A673 (cell line): ENCODE measurements at regions of chr1 and their contacts with region 1.

Region 1: DNA sequence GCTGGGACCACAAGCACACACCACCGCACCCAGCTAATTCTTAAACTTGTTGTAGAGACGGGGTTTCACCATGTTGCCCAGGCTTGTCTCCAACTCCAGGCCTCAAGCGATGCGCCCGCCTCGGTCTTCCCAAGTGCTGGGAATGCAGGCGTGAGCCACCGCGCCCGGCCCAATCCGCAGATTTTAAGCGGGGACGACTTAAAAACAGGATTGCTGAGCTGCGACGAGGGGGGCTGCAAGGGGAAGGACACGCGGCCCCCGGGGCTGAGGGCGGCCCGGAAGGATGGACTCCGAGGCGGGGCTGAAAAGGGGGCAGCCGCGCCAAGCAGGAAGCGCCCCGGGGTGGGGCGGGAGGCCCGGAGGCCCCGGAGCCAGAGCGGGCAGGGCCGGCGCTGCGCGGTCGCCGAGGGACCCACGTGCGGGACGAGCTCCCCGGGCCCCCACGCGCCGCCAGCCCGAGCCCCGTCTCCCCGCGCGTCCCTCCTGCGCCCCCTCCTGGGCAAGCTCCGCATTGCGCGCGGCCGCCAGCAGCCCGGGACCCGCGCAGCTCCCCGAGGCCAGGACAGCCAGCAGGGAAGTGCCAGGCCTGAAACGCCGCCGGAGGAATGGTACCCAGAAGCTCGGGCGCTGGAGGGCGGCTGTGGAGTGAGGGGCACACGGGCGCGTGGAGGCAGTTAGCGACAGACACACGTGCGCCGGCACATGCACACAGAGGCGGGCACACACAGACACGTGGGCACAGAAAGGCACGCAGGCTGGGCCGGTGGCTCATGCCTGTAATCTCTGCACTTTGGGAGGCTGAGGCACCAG is 5.5 kb upstream of the PRKCZ start:
- DNase-seq: peak; percentile 78
- H3K4me3 ChIP-seq: peak overlapping the region; percentile 24
- H3K27ac ChIP-seq: no peak overlapping the region
- H3K4me1 ChIP-seq: peaks cover 5% of the 10 kb centered on the region
- H3K27me3 ChIP-seq: peaks cover 12% of the 10 kb centered on the region
- CTCF ChIP-seq: peak; percentile 73

Region 2: GRCh38 chr1:1079408-1080121 is 965.1 kb before region 1 on chr1:
- CTCF ChIA-PET with region 1: no interaction called
- POLR2A ChIA-PET with region 1: no interaction called
- intact Hi-C with region 1: no loop called
- DNase-seq: peak; percentile 88
- H3K4me3 ChIP-seq: peak overlapping the region; percentile 35
- H3K27ac ChIP-seq: peak overlapping the region; percentile 50
- H3K4me1 ChIP-seq: peaks cover 15% of the 10 kb centered on the region
- H3K27me3 ChIP-seq: no peaks in the 10 kb centered on the region
- CTCF ChIP-seq: no peak

Region 3: DNA sequence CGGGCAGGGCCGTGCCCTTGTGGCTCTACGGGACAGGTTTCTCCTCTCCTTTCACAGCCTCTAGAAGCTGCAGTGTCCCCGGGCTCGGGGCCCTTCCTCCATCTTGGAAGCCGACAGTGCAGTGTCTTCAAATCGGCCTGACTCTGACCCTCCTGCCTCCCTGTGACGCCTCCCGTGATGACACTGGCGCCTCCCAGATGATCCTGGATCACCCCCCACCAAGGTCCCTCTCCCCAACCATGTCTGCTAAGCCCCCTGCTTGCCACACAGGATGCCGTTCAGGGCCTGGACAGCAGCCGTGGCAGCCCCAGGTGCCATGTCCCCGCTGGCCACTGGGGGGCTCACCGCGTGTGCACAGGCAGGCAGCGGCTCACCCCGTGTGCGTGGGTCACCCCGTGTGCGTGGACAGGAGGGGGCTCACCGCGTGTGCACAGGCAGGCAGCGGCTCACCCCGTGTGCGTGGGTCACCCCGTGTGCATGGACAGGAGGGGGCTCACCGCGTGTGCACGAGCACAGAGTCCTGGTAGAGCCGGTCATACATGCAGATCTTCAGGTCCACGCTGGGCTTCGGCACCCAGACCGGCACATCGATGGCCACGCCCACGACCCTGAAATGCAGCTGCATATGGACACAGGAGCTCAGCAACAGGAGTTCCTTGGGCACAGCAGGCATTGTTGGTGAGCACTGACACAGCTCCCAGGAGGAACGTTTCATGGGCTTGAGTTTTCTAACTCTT is 100.7 kb before region 1 on chr1:
- CTCF ChIA-PET with region 1: no interaction called
- POLR2A ChIA-PET with region 1: no interaction called
- intact Hi-C with region 1: loop called (anchors 1 kb)
- DNase-seq: peak; percentile 47
- H3K4me3 ChIP-seq: no peak overlapping the region
- H3K27ac ChIP-seq: no peak overlapping the region
- H3K4me1 ChIP-seq: no peaks in the 10 kb centered on the region
- H3K27me3 ChIP-seq: no peaks in the 10 kb centered on the region
- CTCF ChIP-seq: peak; percentile 93

Region 4: GRCh38 chr1:1959840-1960479 is 84.8 kb before region 1 on chr1:
- CTCF ChIA-PET with region 1: interaction called, 23 read pairs
- POLR2A ChIA-PET with region 1: no interaction called
- intact Hi-C with region 1: loop called (anchors 1 kb)
- DNase-seq: peak; percentile 91
- H3K4me3 ChIP-seq: no peak overlapping the region
- H3K27ac ChIP-seq: no peak overlapping the region
- H3K4me1 ChIP-seq: peaks cover 3% of the 10 kb centered on the region
- H3K27me3 ChIP-seq: no peaks in the 10 kb centered on the region
- CTCF ChIP-seq: peak; percentile 98

Region 5: GRCh38 chr1:1990222-1990621 is 54.5 kb before region 1 on chr1:
- CTCF ChIA-PET with region 1: no interaction called
- POLR2A ChIA-PET with region 1: no interaction called
- intact Hi-C with region 1: no loop called
- DNase-seq: no peak
- H3K4me3 ChIP-seq: no peak overlapping the region
- H3K27ac ChIP-seq: no peak overlapping the region
- H3K4me1 ChIP-seq: no peaks in the 10 kb centered on the region
- H3K27me3 ChIP-seq: no peaks in the 10 kb centered on the region
- CTCF ChIP-seq: no peak